HepG2 (cell line): ENCODE measurements at regions of chr19 and their contacts with region 1.

Region 1: DNA sequence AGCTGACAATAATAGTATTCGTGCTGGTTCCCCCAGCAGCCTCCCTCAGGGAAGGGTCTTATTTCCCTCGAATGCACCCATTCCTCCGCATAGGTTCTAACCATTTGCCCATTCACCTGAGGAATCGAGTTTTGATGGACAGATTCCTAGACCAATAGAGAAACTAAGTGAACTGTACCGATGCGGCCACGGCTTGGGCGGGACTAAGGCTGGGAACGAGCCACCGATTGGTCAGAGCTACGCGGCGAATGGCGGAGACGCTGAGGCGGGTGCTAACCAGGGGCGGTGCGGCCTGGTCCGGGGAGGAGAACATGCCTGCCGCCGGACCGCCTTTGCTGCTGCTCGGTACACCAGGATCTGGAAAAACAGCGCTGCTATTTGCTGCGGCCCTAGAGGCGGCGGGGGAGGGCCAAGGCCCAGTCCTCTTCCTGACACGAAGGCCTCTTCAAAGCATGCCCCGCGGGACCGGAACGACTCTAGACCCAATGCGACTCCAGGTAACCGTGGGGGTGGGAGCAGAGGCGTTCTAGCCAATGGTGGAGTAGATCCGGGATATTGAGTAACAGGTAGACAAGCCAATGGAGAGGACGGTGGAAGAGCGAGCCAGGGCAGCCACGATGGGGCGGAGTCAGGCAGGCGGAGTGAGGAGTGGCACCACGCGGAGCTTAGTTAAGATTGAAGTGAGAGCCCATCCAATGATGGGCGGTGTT is at the start of gene SWSAP1:
- DNase-seq: peak; percentile 99
- ATAC-seq: peak; percentile 94
- H3K4me3 ChIP-seq: peak within 1 kb of the TSS; percentile 69 to 80 (median 75)
- H3K27ac ChIP-seq: peak within 1 kb of the TSS; percentile 95
- H3K4me1 ChIP-seq: peaks cover 35% of the 10 kb centered on the region
- H3K27me3 ChIP-seq: no peaks in the 10 kb centered on the region; a peak in 1 of 5 replicates
- CTCF ChIP-seq: no peak
- EP300 ChIP-seq: no peak
- POLR2A ChIP-seq: peak; percentile 66 to 87; a peak in 3 of 4 replicates
- RAD21 ChIP-seq: peak; percentile 42; the same call in 1 of the 2 replicates
- total RNA-seq, gene SWSAP1: 3.1 and 3.3 TPM in 2 replicates

Region 2: DNA sequence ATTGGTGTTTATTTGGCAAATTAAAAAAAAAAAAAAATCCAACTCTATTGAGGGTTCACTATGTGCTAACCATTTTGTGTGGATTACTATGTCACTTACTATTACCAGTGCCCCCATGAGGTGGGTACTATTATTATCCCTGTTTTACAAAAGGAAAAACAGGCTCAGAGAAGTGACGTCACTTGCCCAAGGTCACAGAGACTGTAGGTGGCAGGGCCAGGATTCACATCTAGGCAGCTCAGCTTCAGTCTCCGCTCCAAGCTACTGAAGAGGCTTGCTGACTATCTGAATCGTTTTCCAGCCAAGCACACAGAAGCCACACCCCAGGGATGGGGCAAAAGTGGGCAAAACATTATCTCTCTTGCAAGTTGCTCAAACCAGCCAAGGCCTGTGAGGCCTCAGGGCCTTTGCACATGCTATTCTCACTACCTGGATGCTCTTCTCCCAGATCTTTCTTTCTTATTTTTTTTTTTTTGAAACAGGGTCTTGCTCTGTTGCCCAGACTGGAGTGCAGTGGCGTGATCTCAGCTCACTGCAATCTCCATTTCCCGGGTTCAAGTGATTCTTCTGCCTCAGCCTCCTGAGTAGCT is 140.0 kb before region 1 on chr19:
- CTCF ChIA-PET with region 1: no interaction called
- POLR2A ChIA-PET with region 1: interaction called, 10 read pairs
- in situ Hi-C with region 1: no loop called
- intact Hi-C with region 1: no loop called
- DNase-seq: peak; percentile 75
- ATAC-seq: no peak
- H3K4me3 ChIP-seq: no peak overlapping the region
- H3K27ac ChIP-seq: no peak overlapping the region
- H3K4me1 ChIP-seq: peaks cover 77% of the 10 kb centered on the region
- H3K27me3 ChIP-seq: no peaks in the 10 kb centered on the region
- CTCF ChIP-seq: no peak
- EP300 ChIP-seq: no peak
- POLR2A ChIP-seq: no peak
- RAD21 ChIP-seq: no peak

Region 3: DNA sequence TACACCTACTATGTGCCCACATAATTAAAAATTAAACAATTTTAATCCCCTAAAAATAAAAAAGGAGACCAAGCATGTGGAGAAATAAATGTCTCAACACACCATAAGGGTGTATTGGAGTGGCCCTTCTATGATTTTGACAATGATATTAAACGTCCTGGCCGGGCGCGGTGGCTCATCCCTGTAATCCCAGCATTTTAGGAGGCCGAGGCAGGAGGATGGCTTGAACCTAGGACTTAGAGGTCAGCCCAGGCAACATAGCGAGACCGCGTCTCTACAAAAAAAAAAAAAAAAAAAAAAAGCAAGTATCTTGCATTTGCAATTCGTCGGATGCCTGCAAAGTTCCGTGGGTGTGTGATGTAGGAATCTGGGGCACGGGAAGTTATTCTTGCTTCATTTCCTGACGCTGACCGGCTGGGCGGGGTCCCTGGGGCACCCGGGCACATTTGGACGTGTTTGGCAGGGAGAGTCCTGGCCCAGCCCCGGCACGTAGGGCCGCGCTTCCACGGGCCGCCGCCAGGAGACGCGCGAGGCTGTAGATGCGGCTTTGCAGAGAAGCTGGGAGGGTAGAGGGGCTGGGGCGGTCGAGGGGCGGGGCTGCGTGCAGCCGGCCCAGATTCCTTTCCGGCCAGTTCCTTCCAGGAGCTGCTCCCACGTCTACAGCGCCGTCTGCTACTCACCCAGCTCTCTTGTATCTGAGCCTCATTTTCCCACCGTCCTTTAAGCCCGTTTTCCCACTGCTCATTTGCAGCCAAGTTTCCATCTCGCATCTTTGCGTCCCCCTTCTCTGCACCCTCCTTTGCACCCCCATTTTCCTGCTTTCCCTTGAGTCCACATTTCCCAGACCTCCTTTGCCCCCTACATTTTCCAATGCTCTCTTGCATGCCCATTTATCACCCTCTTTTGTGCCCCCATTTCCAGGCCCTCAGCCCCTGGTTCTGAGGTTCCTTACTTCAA is 80.9 kb before region 1 on chr19:
- CTCF ChIA-PET with region 1: no interaction called
- POLR2A ChIA-PET with region 1: interaction called, 11 read pairs
- in situ Hi-C with region 1: no loop called
- intact Hi-C with region 1: no loop called
- DNase-seq: peak; percentile 78
- ATAC-seq: peak; percentile 96
- H3K4me3 ChIP-seq: peak overlapping the region in 1 of 3 experiments; percentile 56; a peak in 2 of 6 replicates
- H3K27ac ChIP-seq: no peak overlapping the region
- H3K4me1 ChIP-seq: peaks cover 43% of the 10 kb centered on the region
- H3K27me3 ChIP-seq: peaks cover 3 to 13% of the 10 kb centered on the region in 2 experiments; a peak in 4 of 5 replicates
- CTCF ChIP-seq: peak; percentile 98
- EP300 ChIP-seq: 0 out of 4 replicates have a peak, but pooled peaks of 1 of the 2 experiments have one; percentile 3
- POLR2A ChIP-seq: no peak
- RAD21 ChIP-seq: peak; percentile 96

Region 4: GRCh38 chr19:11339254-11340098 is 35.1 kb before region 1 on chr19 and contains the start of gene RAB3D:
- CTCF ChIA-PET with region 1: no interaction called
- POLR2A ChIA-PET with region 1: interaction called, 68 read pairs
- in situ Hi-C with region 1: no loop called
- intact Hi-C with region 1: loop called (anchors 1 kb)
- DNase-seq: peak; percentile 71
- ATAC-seq: peak; percentile 86
- H3K4me3 ChIP-seq: peak within 1 kb of the TSS; percentile 67 to 81 (median 81)
- H3K27ac ChIP-seq: no peak within 1 kb of the TSS
- H3K4me1 ChIP-seq: peaks cover 35% of the 10 kb centered on the region
- H3K27me3 ChIP-seq: no peaks in the 10 kb centered on the region
- CTCF ChIP-seq: peak; percentile 28; the same call in 1 of the 2 replicates
- EP300 ChIP-seq: no peak
- POLR2A ChIP-seq: peak in 1 of 2 experiments; percentile 68; a peak in 2 of 4 replicates
- RAD21 ChIP-seq: no peak
- total RNA-seq, gene RAB3D: 2.0 and 3.3 TPM in 2 replicates

Region 5: GRCh38 chr19:11422163-11423021 is 47.8 kb after region 1 on chr19:
- CTCF ChIA-PET with region 1: no interaction called
- POLR2A ChIA-PET with region 1: interaction called, 15 read pairs
- in situ Hi-C with region 1: no loop called
- intact Hi-C with region 1: no loop called
- DNase-seq: no peak
- ATAC-seq: no peak
- H3K4me3 ChIP-seq: peak overlapping the region in 2 of 3 experiments; percentile 24 to 69; a peak in 2 of 6 replicates
- H3K27ac ChIP-seq: no peak overlapping the region
- H3K4me1 ChIP-seq: peaks cover 51% of the 10 kb centered on the region
- H3K27me3 ChIP-seq: peaks cover 3 to 35% of the 10 kb centered on the region in 2 experiments; a peak in 4 of 5 replicates
- CTCF ChIP-seq: no peak
- EP300 ChIP-seq: no peak
- POLR2A ChIP-seq: no peak
- RAD21 ChIP-seq: no peak

Region 6: DNA sequence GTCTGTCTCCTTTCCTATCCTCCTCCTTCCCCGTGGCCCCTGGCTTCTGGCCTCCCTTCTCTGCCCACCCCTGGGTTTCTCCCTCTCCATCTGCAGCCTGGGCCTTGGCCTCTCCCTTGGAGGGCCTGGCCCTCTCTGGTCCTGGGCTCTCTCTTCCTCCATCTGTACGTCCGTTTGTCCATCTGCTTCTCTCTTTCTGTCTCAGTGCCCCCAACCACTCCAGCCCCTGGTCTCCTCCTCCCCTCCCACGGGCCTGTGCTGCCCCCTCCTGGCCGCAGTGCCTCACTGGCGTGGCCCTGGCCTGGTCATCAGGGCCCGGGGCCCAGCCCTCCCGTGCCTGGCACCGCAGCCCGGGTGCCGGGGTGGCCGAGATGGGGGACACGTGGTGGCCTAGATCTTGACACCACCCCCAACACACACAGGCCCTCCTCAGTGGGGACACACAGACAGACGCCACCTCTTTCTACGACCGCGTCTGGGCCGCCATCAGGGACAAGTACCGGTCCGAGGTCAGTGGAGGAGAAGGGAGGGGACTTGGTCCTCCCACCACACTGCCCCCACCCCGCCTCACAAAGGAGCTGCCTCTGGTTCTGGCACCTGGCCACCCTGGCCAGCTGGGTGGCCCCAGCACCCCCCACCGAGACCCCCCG is 72.2 kb after region 1 on chr19:
- CTCF ChIA-PET with region 1: interaction called, 10 read pairs
- POLR2A ChIA-PET with region 1: interaction called, 10 read pairs
- in situ Hi-C with region 1: no loop called
- intact Hi-C with region 1: loop called (anchors 2 kb)
- DNase-seq: no peak
- ATAC-seq: peak; percentile 86
- H3K4me3 ChIP-seq: no peak overlapping the region
- H3K27ac ChIP-seq: no peak overlapping the region
- H3K4me1 ChIP-seq: no peaks in the 10 kb centered on the region
- H3K27me3 ChIP-seq: no peaks in the 10 kb centered on the region
- CTCF ChIP-seq: peak; percentile 90
- EP300 ChIP-seq: no peak
- POLR2A ChIP-seq: no peak
- RAD21 ChIP-seq: peak; percentile 91